Heart left ventricle (tissue), 16 donors: ENCODE measurements at regions of chr17 and their contacts with region 1.

Region 1: GRCh38 chr17:80544655-80545498 is at the start of gene RPTOR:
- DNase-seq: peak; percentile 90 to 93 (median 91)
- ATAC-seq: peak; percentile 96 to 100 (median 99)
- H3K4me3 ChIP-seq: peak within 1 kb of the TSS; percentile 70 to 99 (median 88)
- H3K27ac ChIP-seq: peak within 1 kb of the TSS; percentile 42 to 89 (median 80)
- H3K4me1 ChIP-seq: peaks cover 6 to 33% (median 24%) of the 10 kb centered on the region in 12 donors
- H3K27me3 ChIP-seq: peaks cover 0 to 22% (median 0%) of the 10 kb centered on the region in 9 donors
- CTCF ChIP-seq: peak in 1 of 12 donors; percentile 20
- POLR2A ChIP-seq: no peak
- total RNA-seq, gene RPTOR: 18.5 to 31.7 (median 27.1) TPM

Region 2: GRCh38 chr17:80477647-80478478 is 67.0 kb before region 1 on chr17:
- intact Hi-C with region 1: loop called in 1 of 10 experiments (anchors 2 kb)
- DNase-seq: no peak
- ATAC-seq: peak in 3 of 4 donors; percentile 57 to 78 (median 67)
- H3K4me3 ChIP-seq: peak overlapping the region in 11 of 12 donors; percentile 8 to 43 (median 34)
- H3K27ac ChIP-seq: no peak overlapping the region
- H3K4me1 ChIP-seq: peaks cover 0 to 49% (median 31%) of the 10 kb centered on the region in 12 donors
- H3K27me3 ChIP-seq: peaks cover 73 to 100% (median 95%) of the 10 kb centered on the region in 9 donors
- CTCF ChIP-seq: peak in 10 of 12 donors; percentile 14 to 62 (median 40)
- POLR2A ChIP-seq: no peak

Region 3: DNA sequence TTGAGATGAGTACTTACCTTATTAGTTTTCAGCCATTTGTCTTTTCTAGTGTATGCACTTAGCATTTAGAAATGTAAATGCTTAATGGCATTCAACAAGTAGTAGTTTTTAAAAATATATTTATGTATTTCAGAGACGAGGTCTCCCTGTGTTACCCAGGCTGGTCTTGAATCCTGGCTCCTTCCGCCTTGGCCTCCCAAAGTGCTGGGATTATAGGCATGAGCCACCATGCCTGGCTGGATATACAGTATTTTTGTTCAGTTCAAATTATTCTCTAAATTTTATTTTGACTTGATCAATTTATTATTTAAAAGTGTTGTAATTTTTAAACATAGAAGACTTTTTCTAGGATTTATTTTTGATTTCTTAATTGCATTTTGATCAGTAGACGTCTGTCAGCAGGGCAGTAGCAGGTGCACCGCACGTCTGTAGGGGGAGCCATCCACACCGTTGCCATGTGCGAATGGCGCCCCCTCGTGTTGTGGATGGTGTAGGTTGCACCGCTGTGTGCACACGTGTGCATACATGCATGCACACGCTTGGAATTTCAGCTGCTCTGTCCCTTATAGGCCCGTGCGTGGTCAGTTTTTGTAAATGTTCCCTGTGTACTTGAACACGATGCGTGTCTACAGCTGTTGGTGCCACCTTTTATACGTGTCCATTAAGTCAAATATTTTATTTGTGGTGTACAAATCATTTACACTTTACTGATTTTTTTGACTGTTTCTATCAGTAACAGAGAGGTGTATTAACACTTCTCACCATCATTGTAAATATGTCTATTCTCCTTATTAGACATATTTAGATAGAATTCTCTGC is 30.4 kb after region 1 on chr17:
- intact Hi-C with region 1: no loop called
- DNase-seq: peak; percentile 68 to 90 (median 74)
- ATAC-seq: peak in 3 of 4 donors; percentile 84 to 89 (median 86)
- H3K4me3 ChIP-seq: no peak overlapping the region
- H3K27ac ChIP-seq: no peak overlapping the region
- H3K4me1 ChIP-seq: no peaks in the 10 kb centered on the region
- H3K27me3 ChIP-seq: no peaks in the 10 kb centered on the region
- CTCF ChIP-seq: peak; percentile 80 to 100 (median 90)
- POLR2A ChIP-seq: no peak